ENCODE measurements at regions of chr1 and their contacts with region 1.

Region 1: DNA sequence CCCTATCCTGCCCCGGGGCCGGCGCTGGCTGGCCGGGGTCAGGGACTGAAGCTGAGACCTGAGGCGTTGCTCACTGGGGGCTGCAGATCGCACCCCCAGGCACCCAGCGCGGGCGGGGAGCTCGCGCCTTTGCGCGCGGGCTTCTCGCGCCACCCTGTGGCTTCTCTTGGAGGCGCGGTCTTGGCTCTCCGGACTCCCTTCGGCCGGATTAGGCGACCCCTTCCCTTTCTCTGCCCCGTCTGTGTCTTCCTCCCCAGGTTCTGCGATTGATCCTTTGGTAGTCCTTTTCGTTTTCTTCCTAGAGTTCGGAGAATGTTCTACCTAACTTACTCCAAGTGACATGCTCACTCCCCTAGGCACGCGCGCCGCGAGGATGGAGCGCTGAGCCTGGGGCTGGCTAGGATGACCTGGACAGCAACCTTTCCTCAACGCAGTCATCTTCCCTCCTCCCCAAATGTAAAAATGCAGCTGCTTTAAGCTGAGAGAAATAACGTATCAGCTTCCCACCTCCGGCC is 495 bp upstream of the NTRK1 start:
- DNase-seq: peak; percentile 64
- H3K4me3 Mint-ChIP-seq: peak overlapping the region; percentile 74
- H3K27ac Mint-ChIP-seq: no peak overlapping the region
- H3K4me1 Mint-ChIP-seq: peaks cover 52% of the 10 kb centered on the region
- H3K27me3 Mint-ChIP-seq: peaks cover 72% of the 10 kb centered on the region

Region 2: GRCh38 chr1:156689035-156689952 is 170.9 kb before region 1 on chr1:
- CTCF ChIA-PET with region 1: interaction called, 40 read pairs
- POLR2A ChIA-PET with region 1: no interaction called
- DNase-seq: peak; percentile 76
- H3K4me3 Mint-ChIP-seq: no peak overlapping the region
- H3K27ac Mint-ChIP-seq: no peak overlapping the region
- H3K4me1 Mint-ChIP-seq: peaks cover 21% of the 10 kb centered on the region
- H3K27me3 Mint-ChIP-seq: peaks cover 65% of the 10 kb centered on the region

Region 3: GRCh38 chr1:156751758-156752757 is 108.1 kb before region 1 on chr1:
- CTCF ChIA-PET with region 1: interaction called, 7 read pairs
- POLR2A ChIA-PET with region 1: interaction called, 12 read pairs
- DNase-seq: peak; percentile 98
- H3K4me3 Mint-ChIP-seq: peak overlapping the region; percentile 96
- H3K27ac Mint-ChIP-seq: peak overlapping the region; percentile 89
- H3K4me1 Mint-ChIP-seq: peaks cover 40% of the 10 kb centered on the region
- H3K27me3 Mint-ChIP-seq: no peaks in the 10 kb centered on the region

Region 4: GRCh38 chr1:156797212-156797871 is 62.8 kb before region 1 on chr1:
- CTCF ChIA-PET with region 1: interaction called, 238 read pairs
- POLR2A ChIA-PET with region 1: interaction called, 43 read pairs
- DNase-seq: peak; percentile 70
- H3K4me3 Mint-ChIP-seq: no peak overlapping the region
- H3K27ac Mint-ChIP-seq: no peak overlapping the region
- H3K4me1 Mint-ChIP-seq: peaks cover 24% of the 10 kb centered on the region
- H3K27me3 Mint-ChIP-seq: no peaks in the 10 kb centered on the region

Region 5: GRCh38 chr1:156813750-156814570 is 46.2 kb before region 1 on chr1:
- CTCF ChIA-PET with region 1: interaction called, 83 read pairs
- POLR2A ChIA-PET with region 1: interaction called, 52 read pairs
- DNase-seq: peak; percentile 75
- H3K4me3 Mint-ChIP-seq: peak overlapping the region; percentile 96
- H3K27ac Mint-ChIP-seq: peak overlapping the region; percentile 100
- H3K4me1 Mint-ChIP-seq: peaks cover 79% of the 10 kb centered on the region
- H3K27me3 Mint-ChIP-seq: no peaks in the 10 kb centered on the region

Region 6: GRCh38 chr1:156838981-156839410 is 21.2 kb before region 1 on chr1:
- CTCF ChIA-PET with region 1: interaction called, 88 read pairs
- POLR2A ChIA-PET with region 1: interaction called, 9 read pairs
- DNase-seq: peak; percentile 57
- H3K4me3 Mint-ChIP-seq: no peak overlapping the region
- H3K27ac Mint-ChIP-seq: no peak overlapping the region
- H3K4me1 Mint-ChIP-seq: peaks cover 41% of the 10 kb centered on the region
- H3K27me3 Mint-ChIP-seq: peaks cover 44% of the 10 kb centered on the region

Region 7: DNA sequence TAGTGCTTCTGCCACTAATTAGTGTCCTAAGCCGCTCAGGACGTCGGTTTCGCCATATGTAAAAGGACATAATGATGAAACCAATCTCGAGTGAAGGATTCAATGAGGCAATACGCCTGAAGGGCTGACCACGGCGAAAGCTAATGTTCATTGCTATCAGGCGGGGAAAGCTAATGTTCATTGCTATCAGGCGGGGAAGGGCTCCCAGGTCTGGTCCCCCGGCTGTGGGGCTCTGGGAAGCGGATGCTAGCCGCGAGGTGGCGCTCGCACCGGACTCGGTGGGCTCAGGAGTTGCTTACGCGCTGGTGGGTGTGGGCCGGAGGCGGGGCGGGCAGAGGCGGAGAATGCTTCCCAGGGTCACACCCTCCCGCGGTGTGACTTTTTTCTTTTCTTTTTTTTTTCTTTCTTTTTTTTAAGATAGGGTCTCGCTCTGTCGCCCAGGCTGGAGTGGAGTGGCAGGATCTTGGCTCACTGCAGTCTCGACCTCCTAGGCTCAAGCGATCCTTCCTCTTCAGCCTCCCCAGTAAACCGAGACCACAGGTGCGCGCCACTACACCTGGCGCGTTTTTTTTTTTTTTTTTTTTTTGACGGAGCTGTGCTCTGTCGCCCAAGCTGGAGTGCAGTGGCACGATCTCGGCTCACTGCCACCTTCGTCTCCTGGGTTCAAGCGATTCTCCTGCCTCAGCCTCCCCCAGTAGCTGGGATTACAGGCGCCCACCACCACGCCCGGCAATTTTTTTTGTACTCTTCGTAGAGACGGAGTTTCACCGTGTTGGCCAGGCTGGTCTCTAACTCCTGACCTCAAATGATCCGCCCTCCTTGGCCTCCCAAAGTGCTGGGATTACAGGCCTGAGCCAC is 32.2 kb after region 1 on chr1:
- CTCF ChIA-PET with region 1: interaction called, 73 read pairs
- POLR2A ChIA-PET with region 1: interaction called, 3 read pairs
- DNase-seq: peak; percentile 87
- H3K4me3 Mint-ChIP-seq: peak overlapping the region; percentile 49
- H3K27ac Mint-ChIP-seq: no peak overlapping the region
- H3K4me1 Mint-ChIP-seq: peaks cover 22% of the 10 kb centered on the region
- H3K27me3 Mint-ChIP-seq: peaks cover 56% of the 10 kb centered on the region

Region 8: GRCh38 chr1:156914422-156914856 is 54.3 kb after region 1 on chr1:
- CTCF ChIA-PET with region 1: no interaction called
- POLR2A ChIA-PET with region 1: no interaction called
- DNase-seq: no peak
- H3K4me3 Mint-ChIP-seq: no peak overlapping the region
- H3K27ac Mint-ChIP-seq: no peak overlapping the region
- H3K4me1 Mint-ChIP-seq: no peaks in the 10 kb centered on the region
- H3K27me3 Mint-ChIP-seq: peaks cover 31% of the 10 kb centered on the region

Measured in activated CD4-positive, alpha-beta memory T cell treated with anti-CD3 and anti-CD28 coated beads, Interleukin-2, amount 10 ng/mL, durations not matched to agents 7 days and 5 days (primary cell).